Ascending aorta (tissue), 2 donors: ENCODE measurements at regions of chr11 and their contacts with region 1.

Region 1: DNA sequence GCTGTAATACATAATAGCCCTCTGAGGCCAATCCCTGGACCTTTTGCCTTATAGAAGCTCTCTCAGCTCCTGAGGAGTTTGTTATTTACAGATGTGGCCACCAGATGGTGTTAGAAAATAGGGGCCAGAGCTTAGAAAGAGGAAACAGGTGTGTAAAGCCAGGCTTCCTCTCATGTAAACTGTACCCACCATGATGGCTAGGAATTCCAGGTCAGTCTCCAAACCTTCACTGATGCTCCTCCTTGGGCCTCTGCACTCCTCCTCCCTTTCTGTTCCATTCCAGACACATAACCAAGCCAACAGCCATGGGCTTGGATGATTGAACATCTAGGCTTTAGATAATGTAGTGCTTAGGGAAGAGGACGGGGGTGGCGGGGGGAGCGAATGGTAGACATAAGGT is 39.7 kb downstream of the USP35 start:
- DNase-seq: peak in 1 of 2 donors; percentile 61
- H3K4me3 ChIP-seq: no peak overlapping the region
- H3K27ac ChIP-seq: peak overlapping the region in 1 of 2 donors; percentile 31
- H3K4me1 ChIP-seq: peaks cover 0 to 20% of the 10 kb centered on the region in 2 donors
- H3K27me3 ChIP-seq: no peaks in the 10 kb centered on the region
- CTCF ChIP-seq: peak; percentile 21 to 59 (median 26)

Region 2: DNA sequence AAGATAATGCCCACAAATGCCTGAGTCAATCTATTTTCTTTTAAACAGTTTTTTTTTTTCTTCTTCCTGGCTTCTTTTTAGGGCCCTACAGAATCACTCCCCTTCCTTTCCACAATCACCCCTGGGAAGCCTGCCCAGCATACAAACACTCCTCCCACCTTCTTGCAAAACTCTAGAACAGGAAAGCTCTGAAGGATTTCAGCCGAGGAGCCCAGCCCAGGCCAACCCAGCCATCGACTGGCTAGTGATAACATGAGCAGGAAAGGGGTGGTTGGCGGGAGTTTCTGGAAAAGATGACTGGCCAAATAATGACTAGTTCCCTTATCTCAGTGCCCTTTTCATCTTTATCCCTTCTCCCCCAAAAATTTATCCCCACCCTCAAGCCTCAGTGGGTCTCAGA is 28.5 kb after region 1 on chr11:
- intact Hi-C with region 1: loop called (anchors 2 kb)
- DNase-seq: peak; percentile 62 to 95
- H3K4me3 ChIP-seq: no peak overlapping the region
- H3K27ac ChIP-seq: peak overlapping the region; percentile 79 to 82
- H3K4me1 ChIP-seq: peaks cover 12 to 39% of the 10 kb centered on the region in 2 donors
- H3K27me3 ChIP-seq: no peaks in the 10 kb centered on the region
- CTCF ChIP-seq: no peak